Calu3 (cell line): ENCODE measurements at regions of chr2 and their contacts with region 1.

Region 1: DNA sequence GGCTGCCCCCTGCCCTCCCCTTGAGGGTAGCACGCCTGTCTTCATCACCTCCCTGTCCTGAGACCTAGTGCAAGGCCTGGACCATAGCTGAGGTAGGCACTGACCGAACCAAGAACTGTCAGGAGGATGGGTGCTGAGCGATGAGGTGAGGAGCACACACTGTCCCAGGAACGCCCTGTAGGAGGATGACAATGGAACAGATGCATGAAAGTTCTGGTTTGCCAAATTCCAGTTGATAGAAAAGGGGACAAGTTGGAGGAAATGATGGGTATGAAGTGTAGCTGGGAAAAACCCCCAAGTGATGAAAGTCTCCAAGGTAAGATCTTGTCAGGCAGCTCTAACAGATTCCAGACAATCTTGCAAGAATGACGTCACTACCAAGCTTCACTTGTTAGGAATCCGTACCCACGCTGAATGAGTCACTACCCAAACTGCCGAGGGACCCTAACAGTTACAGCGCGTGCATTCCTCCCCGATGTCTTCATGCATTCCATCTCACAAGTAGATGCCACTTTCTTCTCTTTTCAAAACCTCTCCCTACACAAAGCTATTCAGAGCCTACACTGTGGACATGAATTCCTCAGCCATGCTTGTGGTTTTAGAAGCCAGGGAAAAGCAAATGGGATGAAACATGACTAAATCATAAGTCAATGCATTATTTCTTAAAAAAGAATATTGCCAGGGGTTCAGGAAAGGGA is 27.6 kb downstream of the MRPL33 start:
- DNase-seq: peak; percentile 83
- H3K4me3 Mint-ChIP-seq: no peak overlapping the region
- H3K27ac Mint-ChIP-seq: peak overlapping the region; percentile 67
- H3K4me1 Mint-ChIP-seq: peaks cover 57% of the 10 kb centered on the region
- H3K27me3 Mint-ChIP-seq: no peaks in the 10 kb centered on the region
- CTCF ChIP-seq: no peak

Region 2: DNA sequence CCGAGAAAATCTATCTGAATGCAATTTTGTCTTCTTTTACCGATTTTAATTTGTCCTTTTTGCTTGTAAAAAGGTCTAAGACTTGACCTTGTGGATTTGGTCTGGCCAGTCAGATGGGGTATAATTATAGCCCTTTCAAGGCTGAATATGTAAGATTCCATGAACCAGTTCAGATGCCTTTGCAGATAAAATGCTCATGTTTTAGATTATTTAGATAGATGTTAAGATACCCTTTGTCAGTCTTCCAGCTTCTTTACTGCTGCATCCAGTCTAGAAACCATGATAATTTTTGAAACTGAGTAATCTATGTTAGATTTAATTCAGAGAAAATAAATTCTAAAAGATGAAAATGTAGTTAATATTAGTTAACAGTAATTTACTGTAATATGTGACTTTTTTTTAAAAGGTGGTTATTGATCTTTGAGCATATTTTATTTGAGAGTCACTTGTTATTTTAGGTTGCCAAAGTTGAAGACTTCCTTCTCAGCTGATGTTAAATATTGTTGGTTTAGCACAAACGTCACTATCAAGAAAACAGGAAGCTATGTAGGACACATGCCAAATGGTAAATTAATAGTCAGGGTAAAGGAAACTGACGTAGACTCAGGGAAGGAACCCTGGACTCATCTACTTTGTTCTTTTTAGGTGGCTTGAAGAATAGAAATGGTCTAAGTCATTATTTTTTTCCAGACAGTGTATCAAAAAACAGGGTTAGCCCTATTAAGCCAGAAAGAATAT is 121.2 kb after region 1 on chr2:
- CTCF ChIA-PET with region 1: no interaction called
- intact Hi-C with region 1: loop called (anchors 10 kb)
- DNase-seq: peak; percentile 14
- H3K4me3 Mint-ChIP-seq: peak overlapping the region; percentile 40
- H3K27ac Mint-ChIP-seq: peak overlapping the region; percentile 86
- H3K4me1 Mint-ChIP-seq: peaks cover 9% of the 10 kb centered on the region
- H3K27me3 Mint-ChIP-seq: no peaks in the 10 kb centered on the region
- CTCF ChIP-seq: no peak